Right lobe of liver (tissue), 6 donors: ENCODE measurements at regions of chr17 and their contacts with region 1.

Region 1: DNA sequence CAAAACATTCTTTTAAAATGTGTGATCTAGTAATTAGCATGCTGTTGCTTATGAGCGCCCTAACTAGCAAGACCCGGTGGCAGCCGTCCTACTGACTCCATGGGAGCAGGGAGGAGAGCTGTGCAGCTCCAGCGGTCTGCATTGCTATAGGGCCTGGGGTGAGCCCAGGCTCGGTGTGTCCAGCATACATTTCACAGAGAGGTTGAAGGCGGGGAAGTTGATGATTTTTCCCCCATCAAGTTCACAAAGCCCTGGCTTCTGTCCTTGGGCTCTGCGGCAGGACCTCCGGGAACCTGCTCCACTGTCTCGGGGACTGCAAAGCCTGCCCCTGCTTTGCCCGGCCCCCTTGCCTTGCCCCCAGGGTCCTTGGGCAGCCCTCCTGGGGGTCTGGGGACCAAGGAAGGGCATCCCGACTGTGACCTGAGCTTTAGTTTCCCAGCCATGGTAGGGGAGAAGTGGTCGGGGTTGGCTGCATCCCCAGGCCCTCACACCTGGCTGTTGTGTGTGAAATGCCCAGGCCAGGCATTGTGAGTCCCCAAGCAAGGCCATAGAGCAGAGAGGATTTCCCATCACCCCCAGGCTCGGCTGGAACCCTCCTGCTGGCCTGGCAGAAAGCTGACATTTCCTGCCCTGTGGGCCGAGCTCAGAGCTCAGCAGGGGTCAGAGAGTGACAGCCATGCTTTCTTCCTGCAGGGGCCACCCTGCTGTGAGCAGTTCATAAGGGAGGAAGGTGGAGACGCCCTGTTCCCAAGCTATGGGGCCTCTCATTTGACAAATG is 24.8 kb downstream of the KCNJ12 start:
- DNase-seq: no peak
- ATAC-seq: no peak
- H3K4me3 ChIP-seq: no peak overlapping the region
- H3K27ac ChIP-seq: no peak overlapping the region
- H3K4me1 ChIP-seq: no peaks in the 10 kb centered on the region
- H3K27me3 ChIP-seq: no peaks in the 10 kb centered on the region
- CTCF ChIP-seq: no peak
- POLR2A ChIP-seq: no peak

Region 2: DNA sequence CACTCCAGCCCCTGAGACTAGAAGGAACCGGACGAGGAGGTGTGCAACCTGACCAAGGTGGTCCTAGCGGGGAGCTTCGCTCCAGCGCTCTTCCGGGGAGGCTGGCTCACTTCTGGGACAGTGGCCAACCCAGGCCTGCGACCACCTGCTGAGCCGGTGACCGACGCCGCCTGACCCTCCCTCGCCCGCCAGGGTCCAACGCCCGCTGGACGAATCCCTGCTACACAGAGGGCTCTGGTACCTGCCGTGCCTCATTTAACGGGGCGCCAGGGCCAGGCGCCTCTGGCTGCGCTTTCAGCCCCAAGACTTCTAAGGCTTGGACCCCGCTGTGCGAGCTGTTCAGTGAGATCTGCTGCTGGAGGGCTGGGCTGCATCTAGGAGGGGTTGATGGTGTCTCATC is 191.8 kb after region 1 on chr17:
- intact Hi-C with region 1: no loop called
- DNase-seq: no peak
- ATAC-seq: peak in 1 of 4 donors; percentile 23
- H3K4me3 ChIP-seq: no peak overlapping the region
- H3K27ac ChIP-seq: no peak overlapping the region
- H3K4me1 ChIP-seq: peaks cover 0 to 10% (median 3%) of the 10 kb centered on the region in 4 donors
- H3K27me3 ChIP-seq: no peaks in the 10 kb centered on the region
- CTCF ChIP-seq: no peak
- POLR2A ChIP-seq: no peak

Region 3: DNA sequence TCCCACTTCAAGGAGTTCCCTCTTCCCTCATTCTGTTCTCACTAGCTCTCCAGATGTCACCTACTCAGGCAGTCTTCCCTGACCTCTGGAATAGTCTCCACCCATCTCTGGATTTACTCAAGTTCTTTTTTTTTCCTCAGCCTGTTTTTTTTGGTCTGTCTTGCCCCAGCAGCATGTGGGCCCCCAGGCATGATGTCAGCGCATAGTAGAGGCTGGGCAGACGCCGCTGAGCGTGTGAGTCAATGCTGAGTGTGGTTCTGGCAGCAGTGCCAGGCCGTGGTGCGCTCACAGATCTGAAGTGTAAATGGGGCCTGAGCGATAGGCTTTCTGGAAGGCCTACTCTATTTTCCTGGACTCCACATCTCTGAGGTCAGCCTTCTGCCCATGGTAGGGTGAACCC is 288.6 kb after region 1 on chr17:
- intact Hi-C with region 1: loop called (anchors 5 kb)
- DNase-seq: no peak
- ATAC-seq: no peak
- H3K4me3 ChIP-seq: no peak overlapping the region
- H3K27ac ChIP-seq: no peak overlapping the region
- H3K4me1 ChIP-seq: no peaks in the 10 kb centered on the region
- H3K27me3 ChIP-seq: no peaks in the 10 kb centered on the region
- CTCF ChIP-seq: no peak
- POLR2A ChIP-seq: no peak